ENCODE measurements at regions of chr6 and their contacts with region 1.

Region 1: GRCh38 chr6:121430514-121431460 is 4.7 kb upstream of the GJA1 start:
- DNase-seq: no peak
- ATAC-seq: no peak
- H3K4me3 ChIP-seq: no peak overlapping the region
- H3K27ac ChIP-seq: no peak overlapping the region
- H3K4me1 ChIP-seq: no peaks in the 10 kb centered on the region
- H3K27me3 ChIP-seq: peaks cover 9% of the 10 kb centered on the region
- CTCF ChIP-seq: peak; percentile 74; the same call in 1 of the 2 replicates

Region 2: DNA sequence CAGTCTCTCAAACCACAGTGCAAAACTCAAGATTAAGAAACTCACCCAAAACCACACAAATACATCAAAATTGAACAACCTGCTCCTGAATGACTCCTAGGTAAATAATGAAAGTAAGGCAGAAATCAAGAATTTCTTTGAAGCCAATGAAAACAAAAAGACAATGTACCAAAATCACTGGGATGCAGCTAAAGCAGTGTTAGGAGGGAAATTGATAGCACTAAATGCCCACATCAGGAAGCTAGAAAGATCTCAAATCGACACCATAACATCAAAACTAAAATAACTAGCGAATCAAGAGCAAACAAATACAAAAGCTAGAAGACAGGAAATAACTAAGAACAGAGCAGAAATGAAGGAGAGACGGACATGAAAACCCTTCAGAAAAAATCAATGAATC is 167.0 kb before region 1 on chr6:
- CTCF ChIA-PET with region 1: no interaction called
- POLR2A ChIA-PET with region 1: no interaction called
- in situ Hi-C with region 1: no loop called
- intact Hi-C with region 1: no loop called
- DNase-seq: no peak
- ATAC-seq: no peak
- H3K4me3 ChIP-seq: no peak overlapping the region
- H3K27ac ChIP-seq: no peak overlapping the region
- H3K4me1 ChIP-seq: no peaks in the 10 kb centered on the region
- H3K27me3 ChIP-seq: no peaks in the 10 kb centered on the region
- CTCF ChIP-seq: no peak

Region 3: GRCh38 chr6:121849477-121849876 is 418.7 kb after region 1 on chr6:
- CTCF ChIA-PET with region 1: no interaction called
- POLR2A ChIA-PET with region 1: no interaction called
- in situ Hi-C with region 1: no loop called
- intact Hi-C with region 1: loop called (anchors 10 kb)
- DNase-seq: peak; percentile 60
- ATAC-seq: no peak
- H3K4me3 ChIP-seq: no peak overlapping the region
- H3K27ac ChIP-seq: no peak overlapping the region
- H3K4me1 ChIP-seq: no peaks in the 10 kb centered on the region
- H3K27me3 ChIP-seq: no peaks in the 10 kb centered on the region
- CTCF ChIP-seq: peak; percentile 67

Region 4: GRCh38 chr6:122033539-122034181 is 602.9 kb after region 1 on chr6:
- CTCF ChIA-PET with region 1: no interaction called
- POLR2A ChIA-PET with region 1: no interaction called
- in situ Hi-C with region 1: no loop called
- intact Hi-C with region 1: loop called (anchors 2 kb)
- DNase-seq: peak; percentile 60
- ATAC-seq: peak; percentile 89
- H3K4me3 ChIP-seq: no peak overlapping the region
- H3K27ac ChIP-seq: no peak overlapping the region
- H3K4me1 ChIP-seq: no peaks in the 10 kb centered on the region
- H3K27me3 ChIP-seq: no peaks in the 10 kb centered on the region
- CTCF ChIP-seq: peak; percentile 67; the same call in 1 of the 2 replicates

Region 5: GRCh38 chr6:122184401-122184827 is 753.6 kb after region 1 on chr6:
- CTCF ChIA-PET with region 1: no interaction called
- POLR2A ChIA-PET with region 1: no interaction called
- in situ Hi-C with region 1: no loop called
- intact Hi-C with region 1: loop called (anchors 2 kb)
- DNase-seq: no peak
- ATAC-seq: peak; percentile 72
- H3K4me3 ChIP-seq: no peak overlapping the region
- H3K27ac ChIP-seq: no peak overlapping the region
- H3K4me1 ChIP-seq: no peaks in the 10 kb centered on the region
- H3K27me3 ChIP-seq: no peaks in the 10 kb centered on the region
- CTCF ChIP-seq: peak; percentile 43; the same call in 1 of the 2 replicates

Region 6: DNA sequence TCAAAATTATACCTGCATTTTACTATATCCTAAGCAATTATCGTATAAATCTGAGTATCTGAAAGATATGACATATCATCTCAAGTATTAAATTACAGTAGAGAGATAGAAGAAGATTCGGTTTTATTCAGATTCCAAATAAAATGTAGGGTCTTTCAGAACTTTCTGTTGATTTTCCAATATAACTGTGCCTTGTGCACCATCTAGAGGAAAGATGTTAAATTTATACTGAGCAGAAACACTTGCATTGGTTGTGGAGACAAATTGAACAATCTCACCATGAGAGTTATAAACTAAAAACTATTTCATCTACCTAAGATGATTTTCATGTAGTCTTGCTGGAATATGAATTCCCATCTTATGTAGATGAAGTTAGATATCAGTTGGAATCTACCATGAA is 941.9 kb after region 1 on chr6:
- CTCF ChIA-PET with region 1: no interaction called
- POLR2A ChIA-PET with region 1: no interaction called
- in situ Hi-C with region 1: no loop called
- intact Hi-C with region 1: loop called (anchors 10 kb)
- DNase-seq: no peak
- ATAC-seq: no peak
- H3K4me3 ChIP-seq: no peak overlapping the region
- H3K27ac ChIP-seq: no peak overlapping the region
- H3K4me1 ChIP-seq: no peaks in the 10 kb centered on the region
- H3K27me3 ChIP-seq: peaks cover 2% of the 10 kb centered on the region; the same call in 1 of the 2 replicates
- CTCF ChIP-seq: peak; percentile 41; the same call in 1 of the 2 replicates

Region 7: DNA sequence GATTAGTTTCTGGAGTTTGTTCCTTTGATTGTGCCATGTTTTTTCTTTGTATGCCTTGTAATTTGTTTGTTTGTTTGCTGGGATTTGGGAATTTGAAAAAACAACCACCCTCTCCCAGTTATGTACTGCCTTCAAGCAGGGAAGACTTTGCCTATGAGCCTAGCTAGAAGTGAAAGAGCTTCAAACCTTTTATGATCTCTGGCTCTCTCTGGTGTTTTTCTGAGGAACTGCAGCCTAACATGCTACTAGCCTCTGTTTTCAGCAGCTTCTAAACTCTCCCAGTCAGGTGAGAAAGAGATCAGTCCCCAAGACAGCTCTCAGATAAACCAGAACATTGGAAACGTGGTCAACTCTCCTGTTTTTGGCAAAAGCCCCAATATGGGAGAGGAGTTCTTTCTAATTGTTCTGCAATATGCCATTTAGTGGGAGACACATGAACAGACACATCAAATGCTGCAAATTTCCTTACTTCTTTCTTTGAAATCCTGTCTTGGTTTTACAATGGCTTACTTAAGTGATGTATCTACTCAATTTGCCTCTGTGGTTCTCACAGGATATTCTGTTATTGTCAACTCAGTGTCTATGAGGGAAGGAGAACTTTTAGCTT is 1099.8 kb after region 1 on chr6:
- CTCF ChIA-PET with region 1: no interaction called
- POLR2A ChIA-PET with region 1: no interaction called
- in situ Hi-C with region 1: no loop called
- intact Hi-C with region 1: loop called (anchors 10 kb)
- DNase-seq: peak; percentile 78
- ATAC-seq: peak; percentile 97
- H3K4me3 ChIP-seq: no peak overlapping the region
- H3K27ac ChIP-seq: no peak overlapping the region
- H3K4me1 ChIP-seq: no peaks in the 10 kb centered on the region
- H3K27me3 ChIP-seq: 0 out of 2 replicates have a peak, but pooled peaks cover 2% of the 10 kb centered on the region
- CTCF ChIP-seq: peak; percentile 90

Measured in Panc1 (cell line).